Endothelial cell of umbilical vein (primary cell): ENCODE measurements at regions of chr4 and their contacts with region 1.

Region 1: GRCh38 chr4:65651031-65651430 is 19.3 kb downstream of the EPHA5 start:
- DNase-seq: no peak
- H3K4me3 ChIP-seq: no peak overlapping the region
- H3K27ac ChIP-seq: no peak overlapping the region
- H3K4me1 ChIP-seq: peaks cover 26% of the 10 kb centered on the region
- H3K27me3 ChIP-seq: no peaks in the 10 kb centered on the region
- CTCF ChIP-seq: no peak
- POLR2A ChIP-seq: no peak

Region 2: DNA sequence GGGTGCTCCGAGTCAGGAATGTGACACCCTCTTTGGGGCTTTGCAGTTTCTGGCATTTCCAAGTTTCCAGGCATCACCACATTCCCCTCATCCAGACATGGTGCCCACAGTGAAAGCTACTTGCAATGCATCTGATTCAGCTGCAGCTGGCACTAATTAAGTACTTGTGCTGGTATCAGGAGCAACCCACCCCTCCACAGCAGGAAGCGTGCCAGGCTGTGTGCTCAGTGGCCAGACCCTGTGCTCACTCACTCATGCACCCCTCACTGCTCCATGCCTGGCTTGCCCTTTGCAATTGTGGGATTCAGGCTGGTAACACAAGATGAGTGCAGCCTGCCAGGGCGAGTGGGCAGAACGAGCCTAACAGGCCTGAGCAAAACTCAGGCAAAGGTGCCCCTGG is 251.9 kb before region 1 on chr4:
- CTCF ChIA-PET with region 1: no interaction called
- POLR2A ChIA-PET with region 1: no interaction called
- dilution Hi-C with region 1: no loop called
- intact Hi-C with region 1: no loop called
- DNase-seq: no peak
- H3K4me3 ChIP-seq: no peak overlapping the region
- H3K27ac ChIP-seq: no peak overlapping the region
- H3K4me1 ChIP-seq: no peaks in the 10 kb centered on the region
- H3K27me3 ChIP-seq: no peaks in the 10 kb centered on the region
- CTCF ChIP-seq: no peak
- POLR2A ChIP-seq: no peak

Region 3: DNA sequence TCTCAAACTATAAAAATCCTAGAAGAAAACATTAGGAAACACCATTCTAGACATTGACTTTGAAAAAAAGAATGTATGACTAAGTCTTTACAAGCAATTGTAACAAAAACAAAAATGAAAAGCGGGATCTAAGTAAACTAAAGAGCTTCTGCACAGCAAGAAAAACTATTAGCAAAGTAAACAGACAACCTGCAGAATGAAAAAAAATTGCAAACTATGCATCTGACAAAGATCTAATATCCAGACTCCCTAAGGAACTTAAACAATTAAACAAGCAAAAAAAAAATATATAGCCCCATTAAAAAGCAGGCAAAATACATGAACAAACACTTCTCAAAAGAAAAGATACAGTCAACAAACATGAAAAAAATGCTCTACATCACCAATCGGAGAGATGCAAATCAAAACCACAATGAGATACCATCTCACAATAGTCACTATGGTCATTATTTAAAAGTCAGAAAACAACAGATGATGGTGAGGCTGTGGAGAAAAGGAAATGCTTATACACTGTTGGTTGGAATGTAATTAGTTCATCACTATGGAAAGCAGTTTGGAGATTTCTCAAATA is 148.8 kb before region 1 on chr4:
- CTCF ChIA-PET with region 1: no interaction called
- POLR2A ChIA-PET with region 1: no interaction called
- dilution Hi-C with region 1: no loop called
- intact Hi-C with region 1: loop called (anchors 5 kb)
- DNase-seq: peak; percentile 26
- H3K4me3 ChIP-seq: no peak overlapping the region
- H3K27ac ChIP-seq: peak overlapping the region; percentile 5
- H3K4me1 ChIP-seq: peaks cover 13% of the 10 kb centered on the region
- H3K27me3 ChIP-seq: no peaks in the 10 kb centered on the region
- CTCF ChIP-seq: no peak
- POLR2A ChIP-seq: no peak

Region 4: DNA sequence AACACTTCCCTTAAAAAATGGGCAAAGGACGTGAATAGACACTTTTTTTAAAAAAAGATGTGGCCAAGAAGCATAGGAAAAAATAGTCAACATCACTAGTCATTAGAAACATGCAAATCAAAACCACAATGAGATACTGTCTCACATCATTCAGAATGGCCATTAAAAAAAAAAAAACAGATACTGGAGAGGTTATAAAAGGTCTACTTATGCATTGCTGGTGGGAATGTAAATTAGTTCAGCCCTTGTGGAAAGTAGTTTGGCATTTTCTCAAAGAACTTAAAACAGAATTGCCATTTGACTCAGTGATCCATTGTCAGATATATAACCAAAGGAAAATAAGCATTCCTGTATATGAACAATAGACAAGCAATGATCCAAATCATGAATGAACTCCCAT is 372.0 kb after region 1 on chr4:
- CTCF ChIA-PET with region 1: no interaction called
- POLR2A ChIA-PET with region 1: no interaction called
- dilution Hi-C with region 1: no loop called
- intact Hi-C with region 1: no loop called
- DNase-seq: no peak
- H3K4me3 ChIP-seq: no peak overlapping the region
- H3K27ac ChIP-seq: no peak overlapping the region
- H3K4me1 ChIP-seq: no peaks in the 10 kb centered on the region
- H3K27me3 ChIP-seq: no peaks in the 10 kb centered on the region
- CTCF ChIP-seq: no peak
- POLR2A ChIP-seq: no peak

Region 5: DNA sequence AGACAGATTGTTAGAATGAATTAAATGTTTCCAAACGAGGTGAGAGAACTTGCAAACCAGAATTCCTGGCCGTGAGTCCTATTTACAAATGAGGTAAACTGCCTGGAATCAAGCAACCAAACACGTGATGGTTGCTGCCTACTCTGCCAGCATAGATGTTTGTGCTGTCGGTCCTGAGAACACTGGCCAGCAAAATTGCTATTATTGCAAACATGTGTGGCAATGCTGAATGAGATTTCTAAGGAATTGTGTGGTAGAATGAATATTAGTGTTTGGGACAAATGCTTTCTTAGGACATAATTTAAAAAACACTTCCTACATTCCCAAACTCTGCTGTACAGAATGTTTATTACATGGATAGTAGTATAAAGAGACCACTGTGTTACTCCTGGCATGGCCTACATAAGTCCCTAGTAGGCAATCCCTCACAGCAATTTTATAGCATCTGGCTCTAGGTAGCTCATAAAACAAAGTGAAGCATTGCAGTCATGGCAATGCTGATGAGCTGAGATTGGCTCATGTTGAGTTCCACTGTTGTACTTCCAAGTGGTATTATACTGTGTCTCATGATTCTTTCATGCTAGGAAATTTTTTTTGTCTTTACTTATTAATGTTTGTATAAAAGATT is 624.5 kb after region 1 on chr4:
- CTCF ChIA-PET with region 1: no interaction called
- POLR2A ChIA-PET with region 1: no interaction called
- dilution Hi-C with region 1: no loop called
- intact Hi-C with region 1: no loop called
- DNase-seq: no peak
- H3K4me3 ChIP-seq: no peak overlapping the region
- H3K27ac ChIP-seq: no peak overlapping the region
- H3K4me1 ChIP-seq: no peaks in the 10 kb centered on the region
- H3K27me3 ChIP-seq: no peaks in the 10 kb centered on the region
- CTCF ChIP-seq: no peak
- POLR2A ChIP-seq: no peak